HepG2 (cell line): ENCODE measurements at regions of chr19 and their contacts with region 1.

Region 1: GRCh38 chr19:33705090-33705847 is 83.5 kb downstream of the CHST8 start:
- DNase-seq: no peak
- ATAC-seq: peak; percentile 79
- H3K4me3 ChIP-seq: no peak overlapping the region
- H3K27ac ChIP-seq: no peak overlapping the region
- H3K4me1 ChIP-seq: no peaks in the 10 kb centered on the region
- H3K27me3 ChIP-seq: peaks cover 2 to 24% of the 10 kb centered on the region in 2 experiments; a peak in 4 of 5 replicates
- CTCF ChIP-seq: peak; percentile 60
- EP300 ChIP-seq: no peak
- POLR2A ChIP-seq: no peak
- RAD21 ChIP-seq: no peak

Region 2: GRCh38 chr19:33430674-33431277 is 274.5 kb before region 1 on chr19:
- CTCF ChIA-PET with region 1: interaction called, 3 read pairs
- POLR2A ChIA-PET with region 1: no interaction called
- in situ Hi-C with region 1: no loop called
- intact Hi-C with region 1: loop called (anchors 2 kb)
- DNase-seq: peak; percentile 25
- ATAC-seq: peak; percentile 93
- H3K4me3 ChIP-seq: no peak overlapping the region
- H3K27ac ChIP-seq: no peak overlapping the region
- H3K4me1 ChIP-seq: no peaks in the 10 kb centered on the region
- H3K27me3 ChIP-seq: no peaks in the 10 kb centered on the region
- CTCF ChIP-seq: peak; percentile 90
- EP300 ChIP-seq: no peak
- POLR2A ChIP-seq: no peak
- RAD21 ChIP-seq: peak; percentile 74; the same call in 1 of the 2 replicates

Region 3: GRCh38 chr19:33675501-33676124 is 29.7 kb before region 1 on chr19:
- CTCF ChIA-PET with region 1: no interaction called
- POLR2A ChIA-PET with region 1: no interaction called
- in situ Hi-C with region 1: no loop called
- intact Hi-C with region 1: no loop called
- DNase-seq: no peak
- ATAC-seq: no peak
- H3K4me3 ChIP-seq: no peak overlapping the region
- H3K27ac ChIP-seq: no peak overlapping the region
- H3K4me1 ChIP-seq: no peaks in the 10 kb centered on the region
- H3K27me3 ChIP-seq: no peaks in the 10 kb centered on the region
- CTCF ChIP-seq: no peak
- EP300 ChIP-seq: no peak
- POLR2A ChIP-seq: no peak
- RAD21 ChIP-seq: no peak